ENCODE measurements at regions of chr3 and their contacts with region 1.

Region 1: GRCh38 chr3:50587806-50588758 is 18.8 kb downstream of the HEMK1 start:
- DNase-seq: no peak
- H3K4me3 ChIP-seq: no peak overlapping the region
- H3K27ac ChIP-seq: no peak overlapping the region
- H3K4me1 ChIP-seq: peaks cover 4% of the 10 kb centered on the region
- H3K27me3 ChIP-seq: no peaks in the 10 kb centered on the region
- CTCF ChIP-seq: no peak

Region 2: GRCh38 chr3:50544999-50545398 is 43.1 kb before region 1 on chr3:
- CTCF ChIA-PET with region 1: no interaction called
- dilution Hi-C with region 1: no loop called
- in situ Hi-C with region 1: no loop called
- intact Hi-C with region 1: no loop called
- DNase-seq: no peak
- H3K4me3 ChIP-seq: no peak overlapping the region
- H3K27ac ChIP-seq: no peak overlapping the region
- H3K4me1 ChIP-seq: peaks cover 12% of the 10 kb centered on the region
- H3K27me3 ChIP-seq: no peaks in the 10 kb centered on the region
- CTCF ChIP-seq: no peak

Region 3: GRCh38 chr3:50885070-50885850 is 297.2 kb after region 1 on chr3:
- CTCF ChIA-PET with region 1: interaction called, 11 read pairs
- dilution Hi-C with region 1: no loop called
- in situ Hi-C with region 1: no loop called
- intact Hi-C with region 1: no loop called
- DNase-seq: peak; percentile 9
- H3K4me3 ChIP-seq: no peak overlapping the region
- H3K27ac ChIP-seq: no peak overlapping the region
- H3K4me1 ChIP-seq: no peaks in the 10 kb centered on the region
- H3K27me3 ChIP-seq: no peaks in the 10 kb centered on the region
- CTCF ChIP-seq: peak; percentile 29 to 46